ENCODE measurements at regions of chr20 and their contacts with region 1.

Region 1: DNA sequence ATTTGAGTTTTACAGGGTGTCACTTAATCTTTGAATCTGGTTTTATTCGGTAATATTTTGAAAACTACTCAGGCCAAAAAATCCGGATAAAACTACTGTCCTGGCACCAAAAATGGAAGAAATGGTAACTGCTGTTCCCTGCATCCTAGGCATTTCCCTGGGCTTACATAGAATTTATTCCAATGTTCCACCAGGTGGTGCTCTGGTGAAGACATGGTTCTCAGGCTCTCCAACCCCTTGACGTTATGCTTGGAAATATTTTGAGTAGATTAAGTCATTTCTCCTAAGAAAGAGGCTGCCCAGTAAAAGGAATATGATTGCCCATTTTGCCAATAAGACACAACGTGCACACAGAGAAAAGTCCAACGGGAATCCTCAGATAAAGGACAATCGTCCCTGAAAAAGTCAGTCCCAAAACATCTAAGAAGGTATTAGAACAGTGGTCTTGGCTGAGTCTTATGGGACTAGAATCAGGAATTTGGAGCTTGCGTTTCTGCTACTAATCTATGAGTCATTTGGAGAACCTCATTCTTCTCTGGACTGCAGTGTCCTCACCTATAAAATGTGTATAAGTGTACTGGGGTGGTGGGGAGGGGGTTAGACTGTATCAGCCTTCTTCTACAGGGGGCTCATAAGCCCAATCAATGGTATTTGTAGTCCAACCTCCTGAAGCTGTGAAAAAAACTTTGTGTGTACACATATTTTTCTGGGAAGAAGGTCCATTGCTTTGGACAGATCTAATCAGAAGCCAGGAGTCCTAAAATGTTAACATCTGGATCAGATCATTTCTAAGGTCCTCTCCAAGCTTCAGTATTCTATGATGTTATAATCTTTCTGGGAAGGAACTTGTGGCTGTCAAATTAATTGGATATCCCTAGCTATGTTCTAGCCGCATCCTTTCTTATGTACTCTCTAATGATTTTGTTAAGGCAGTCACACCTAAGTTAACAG is 131.0 kb upstream of the BMP2 start:
- H3K4me3 Mint-ChIP-seq: no peak overlapping the region
- H3K27ac Mint-ChIP-seq: no peak overlapping the region
- H3K4me1 Mint-ChIP-seq: peaks cover 5% of the 10 kb centered on the region
- H3K27me3 Mint-ChIP-seq: peaks cover 12% of the 10 kb centered on the region

Region 2: DNA sequence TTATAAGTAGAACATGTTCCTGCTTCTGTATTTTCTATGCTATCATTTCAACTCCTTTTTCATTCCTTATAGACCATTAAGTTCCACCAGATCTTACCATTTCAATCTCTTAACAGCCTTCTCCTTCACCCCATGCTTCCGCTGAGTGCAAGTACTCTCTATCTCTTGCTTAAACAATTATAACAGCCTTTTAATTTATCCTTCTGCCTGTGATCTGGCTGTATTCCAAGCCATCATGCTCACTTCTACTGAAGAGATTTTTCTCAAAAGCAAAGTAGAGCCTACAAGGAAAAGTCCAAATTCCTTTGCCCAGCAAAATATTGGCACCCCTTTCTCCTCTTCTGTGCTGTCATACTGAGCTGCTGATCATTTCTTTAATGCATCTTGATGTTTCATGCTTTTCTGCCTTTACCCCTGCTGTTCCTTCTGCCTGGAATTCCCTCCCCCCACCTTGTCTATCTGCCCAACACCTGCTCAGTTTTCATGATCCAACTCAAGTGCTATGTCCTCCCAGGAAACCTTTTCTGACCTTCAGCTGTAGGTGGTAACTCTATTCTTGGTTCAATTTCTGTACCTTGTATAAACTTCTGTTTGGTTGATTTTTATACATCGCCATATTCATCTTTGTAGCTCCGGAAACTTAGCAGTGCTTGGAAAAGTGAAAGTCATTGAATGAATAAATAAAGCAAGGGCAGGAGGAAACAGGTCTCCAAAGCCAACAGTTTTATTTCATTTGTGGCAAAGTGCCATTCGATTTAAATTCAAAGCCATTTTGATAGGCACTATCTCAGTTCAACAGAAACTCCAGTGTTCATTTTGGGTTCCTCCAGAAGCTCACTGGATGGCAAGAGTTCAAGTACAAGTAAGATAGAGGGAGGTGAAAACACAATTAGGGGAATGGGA is 120.5 kb after region 1 on chr20:
- intact Hi-C with region 1: loop called (anchors 10 kb)
- H3K4me3 Mint-ChIP-seq: no peak overlapping the region
- H3K27ac Mint-ChIP-seq: no peak overlapping the region
- H3K4me1 Mint-ChIP-seq: no peaks in the 10 kb centered on the region
- H3K27me3 Mint-ChIP-seq: peaks cover 47% of the 10 kb centered on the region

Region 3: DNA sequence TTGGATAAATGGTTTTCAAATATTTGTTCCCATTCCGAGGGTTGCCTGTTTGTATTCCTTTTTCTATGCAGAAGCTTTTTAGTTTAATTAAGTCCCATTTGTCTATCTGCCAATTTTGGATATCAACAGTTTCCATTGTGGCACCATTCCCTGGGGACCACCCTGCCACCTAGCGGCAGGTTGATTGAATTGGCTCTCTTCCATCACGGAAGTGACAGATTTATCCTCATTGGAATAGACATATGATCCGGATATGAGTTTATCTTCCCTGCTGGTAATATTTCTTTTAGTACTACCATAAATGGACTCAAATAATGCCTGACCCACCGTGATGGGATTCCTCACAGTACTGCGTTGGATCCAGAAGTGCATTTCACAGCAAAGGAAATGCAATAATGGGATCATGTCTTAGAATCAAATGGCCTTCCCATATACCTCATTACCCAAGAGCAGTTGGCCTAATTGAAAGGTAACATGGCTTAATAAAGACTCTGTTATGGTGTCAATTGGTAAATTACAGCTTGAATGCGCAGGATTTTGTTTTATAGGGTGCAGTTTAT is 458.0 kb after region 1 on chr20:
- intact Hi-C with region 1: loop called (anchors 5 kb)
- H3K4me3 Mint-ChIP-seq: no peak overlapping the region
- H3K27ac Mint-ChIP-seq: no peak overlapping the region
- H3K4me1 Mint-ChIP-seq: no peaks in the 10 kb centered on the region
- H3K27me3 Mint-ChIP-seq: no peaks in the 10 kb centered on the region